ENCODE measurements at regions of chr1 and their contacts with region 1.

Region 1: DNA sequence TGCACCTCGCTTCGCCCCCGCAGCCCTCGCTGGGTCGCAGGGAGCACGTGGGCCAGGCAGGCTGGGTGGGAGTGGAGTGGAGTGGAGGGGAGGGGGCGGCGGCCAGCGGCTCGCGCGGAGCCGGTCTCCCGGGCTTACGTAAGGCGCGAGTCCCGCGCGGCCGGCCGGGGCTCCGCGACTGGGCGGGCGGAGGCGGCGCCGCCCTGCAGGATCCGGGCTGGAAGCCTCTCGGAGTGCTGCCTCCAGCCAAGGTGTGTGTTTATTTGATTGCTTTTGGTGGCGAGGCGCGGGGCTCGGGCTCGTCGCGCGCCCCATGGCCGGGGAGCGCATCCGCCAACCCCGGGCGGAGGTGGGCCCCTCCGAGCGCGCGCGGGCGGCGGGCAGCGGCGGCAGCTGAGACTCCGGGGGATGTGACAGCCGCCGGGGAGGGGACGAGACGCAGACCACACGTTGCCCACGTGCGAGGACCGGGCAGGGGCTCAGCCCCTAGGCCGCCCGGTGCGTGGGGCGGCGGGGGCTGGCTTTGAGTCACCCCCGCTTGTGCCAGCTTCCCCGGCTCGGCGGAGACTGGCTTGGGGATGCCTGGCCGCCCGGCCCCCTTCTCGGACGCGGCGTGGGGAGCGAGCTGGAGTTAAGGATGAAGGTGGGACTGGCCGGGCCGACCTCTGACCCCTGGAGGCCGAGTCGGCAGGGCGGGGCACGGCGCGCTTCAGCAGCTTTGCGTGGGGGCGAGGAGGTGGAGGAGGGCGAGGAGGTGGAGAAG is 407 bp upstream of the AK4 start:
- DNase-seq: peak; percentile 62
- H3K4me3 ChIP-seq: peak overlapping the region; percentile 47 to 97 (median 88)
- H3K27ac ChIP-seq: peak overlapping the region; percentile 83 to 92 (median 84)
- H3K4me1 ChIP-seq: peaks cover 0 to 22% (median 17%) of the 10 kb centered on the region in 4 donors
- H3K27me3 ChIP-seq: peaks cover 3% of the 10 kb centered on the region
- CTCF ChIP-seq: no peak
- EP300 ChIP-seq: no peak
- POLR2A ChIP-seq: no peak

Region 2: GRCh38 chr1:65159801-65160523 is 12.4 kb after region 1 on chr1:
- in situ Hi-C with region 1: no loop called
- intact Hi-C with region 1: loop called (anchors 2 kb)
- DNase-seq: no peak
- H3K4me3 ChIP-seq: no peak overlapping the region
- H3K27ac ChIP-seq: no peak overlapping the region
- H3K4me1 ChIP-seq: peaks cover 0 to 30% (median 8%) of the 10 kb centered on the region in 4 donors
- H3K27me3 ChIP-seq: no peaks in the 10 kb centered on the region
- CTCF ChIP-seq: no peak
- EP300 ChIP-seq: no peak
- POLR2A ChIP-seq: no peak

Region 3: DNA sequence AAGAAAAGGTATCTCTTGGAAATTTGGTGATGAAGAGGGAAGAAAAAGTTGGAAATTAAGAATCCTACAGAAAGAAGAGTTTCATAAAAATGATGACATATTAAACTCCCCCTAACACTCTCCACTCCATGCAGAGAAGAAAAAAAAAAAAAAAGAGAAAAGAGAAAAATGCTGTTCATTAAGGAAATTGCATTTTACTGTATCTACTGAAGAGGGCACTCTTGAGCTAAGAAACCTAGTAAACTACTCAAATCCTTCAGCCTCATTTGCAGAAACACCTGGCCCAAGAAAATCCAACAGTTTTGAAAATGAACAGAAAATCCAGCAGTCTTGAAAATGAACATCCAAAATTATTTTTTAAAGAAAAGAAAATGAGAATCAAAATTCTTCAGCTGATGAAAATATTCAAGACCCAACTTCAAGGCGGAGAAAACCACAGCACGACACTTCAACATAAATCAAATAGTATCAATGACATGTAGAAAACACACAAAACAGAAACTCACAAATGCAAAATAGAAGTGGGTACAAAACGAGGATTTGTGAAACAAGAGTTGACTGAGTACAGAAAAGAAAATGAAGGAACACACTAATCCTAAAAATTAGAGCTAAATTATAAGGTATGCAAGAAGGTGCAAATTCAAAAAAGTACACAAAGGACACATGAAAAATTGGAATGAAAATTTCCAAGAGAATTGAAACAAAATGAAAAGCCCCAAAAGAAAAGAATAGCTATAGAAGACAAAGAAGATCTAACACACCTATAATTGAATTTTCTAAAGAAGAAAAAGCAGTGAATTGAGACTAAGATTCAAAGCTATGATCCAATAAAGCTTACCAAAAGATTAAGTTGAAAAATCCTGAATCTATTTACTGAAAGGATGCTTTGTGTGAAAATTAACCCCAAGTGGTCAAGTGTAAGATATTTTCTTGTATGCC is 88.5 kb after region 1 on chr1:
- in situ Hi-C with region 1: no loop called
- intact Hi-C with region 1: no loop called
- DNase-seq: no peak
- H3K4me3 ChIP-seq: no peak overlapping the region
- H3K27ac ChIP-seq: no peak overlapping the region
- H3K4me1 ChIP-seq: no peaks in the 10 kb centered on the region
- H3K27me3 ChIP-seq: no peaks in the 10 kb centered on the region
- CTCF ChIP-seq: peak; percentile 40 to 64 (median 44)
- EP300 ChIP-seq: no peak
- POLR2A ChIP-seq: no peak

Region 4: DNA sequence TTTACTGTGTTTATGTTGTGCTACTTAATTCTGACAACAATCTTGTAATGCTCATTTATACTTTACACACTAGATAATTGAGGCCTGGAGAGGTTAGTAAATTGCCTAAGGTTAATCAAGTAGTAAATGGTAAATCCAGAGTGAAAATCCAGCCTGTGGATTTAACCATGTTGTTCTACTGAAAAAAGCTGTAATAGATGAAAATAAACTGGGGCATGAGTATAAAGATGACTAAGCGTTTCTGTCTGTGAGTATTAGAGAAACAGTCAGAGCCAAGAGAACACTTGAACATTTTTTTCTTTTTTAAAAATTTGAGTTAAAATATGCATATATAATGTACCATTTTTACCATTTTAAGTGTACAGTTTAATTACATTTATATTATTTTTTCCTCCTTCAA is 225.0 kb after region 1 on chr1:
- in situ Hi-C with region 1: no loop called
- intact Hi-C with region 1: no loop called
- DNase-seq: no peak
- H3K4me3 ChIP-seq: no peak overlapping the region
- H3K27ac ChIP-seq: no peak overlapping the region
- H3K4me1 ChIP-seq: no peaks in the 10 kb centered on the region
- H3K27me3 ChIP-seq: no peaks in the 10 kb centered on the region
- CTCF ChIP-seq: no peak
- EP300 ChIP-seq: no peak
- POLR2A ChIP-seq: no peak